PC-9 (cell line): ENCODE measurements at regions of chr4 and their contacts with region 1.

Region 1: GRCh38 chr4:41296995-41297394 is 40.3 kb downstream of the UCHL1 start:
- DNase-seq: no peak
- H3K4me3 ChIP-seq: no peak overlapping the region
- H3K27ac ChIP-seq: no peak overlapping the region
- H3K4me1 ChIP-seq: no peaks in the 10 kb centered on the region
- H3K27me3 ChIP-seq: no peaks in the 10 kb centered on the region
- CTCF ChIP-seq: no peak

Region 2: DNA sequence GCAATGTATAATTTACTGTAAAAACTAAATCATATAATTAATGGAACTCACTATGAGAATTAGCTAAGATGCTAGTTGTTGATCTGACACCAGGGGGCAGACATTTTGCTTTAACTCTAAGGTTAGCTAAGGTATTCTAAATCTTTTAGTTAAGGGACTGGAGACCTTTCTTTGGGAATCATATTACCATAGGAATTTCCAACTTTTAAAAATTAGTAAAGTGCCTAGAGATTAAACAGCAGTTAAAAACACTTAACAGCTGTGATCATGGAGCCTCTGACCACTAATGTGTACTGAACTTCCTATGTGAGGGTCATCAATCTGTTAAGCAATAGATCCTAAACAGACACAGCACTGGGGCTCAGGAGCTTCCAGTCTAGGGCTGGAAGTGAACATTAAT is 320.7 kb before region 1 on chr4:
- CTCF ChIA-PET with region 1: no interaction called
- POLR2A ChIA-PET with region 1: no interaction called
- intact Hi-C with region 1: no loop called
- DNase-seq: peak; percentile 38 to 63
- H3K4me3 ChIP-seq: no peak overlapping the region
- H3K27ac ChIP-seq: no peak overlapping the region
- H3K4me1 ChIP-seq: peaks cover 4% of the 10 kb centered on the region; the same call in 1 of the 2 replicates
- H3K27me3 ChIP-seq: no peaks in the 10 kb centered on the region
- CTCF ChIP-seq: peak; percentile 86

Region 3: DNA sequence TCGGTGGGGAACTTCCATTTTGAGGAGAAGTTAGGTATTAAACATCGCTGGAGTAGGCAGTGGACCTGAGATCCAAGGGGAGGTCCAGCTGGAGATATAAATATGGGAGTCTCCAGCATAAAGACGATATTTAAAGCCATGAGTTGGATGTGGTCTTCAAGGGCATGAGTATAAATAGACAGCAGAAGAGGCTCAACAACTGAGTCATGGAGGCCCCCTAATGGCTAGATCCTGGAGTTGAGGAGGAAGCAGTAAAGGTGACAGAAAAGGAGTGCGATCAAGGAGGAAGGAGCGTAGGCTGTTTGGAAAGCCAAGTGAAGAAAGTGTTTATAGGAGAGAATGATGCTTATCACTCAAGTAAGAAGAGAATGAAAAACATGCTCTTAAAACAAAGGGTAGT is 64.6 kb before region 1 on chr4:
- CTCF ChIA-PET with region 1: no interaction called
- POLR2A ChIA-PET with region 1: interaction called, 11 read pairs
- intact Hi-C with region 1: no loop called
- DNase-seq: no peak
- H3K4me3 ChIP-seq: no peak overlapping the region
- H3K27ac ChIP-seq: no peak overlapping the region
- H3K4me1 ChIP-seq: no peaks in the 10 kb centered on the region
- H3K27me3 ChIP-seq: no peaks in the 10 kb centered on the region
- CTCF ChIP-seq: no peak